ENCODE measurements at regions of chr18 and their contacts with region 1.

Region 1: GRCh38 chr18:63511286-63511685 is 30.9 kb upstream of the SERPINB12 start:
- DNase-seq: peak; percentile 65
- ATAC-seq: peak; percentile 78
- H3K4me3 Mint-ChIP-seq: peak overlapping the region; percentile 45; the same call in 1 of the 2 replicates
- H3K27ac Mint-ChIP-seq: no peak overlapping the region
- H3K4me1 Mint-ChIP-seq: peaks cover 46% of the 10 kb centered on the region
- H3K27me3 Mint-ChIP-seq: no peaks in the 10 kb centered on the region
- CTCF ChIP-seq: peak; percentile 40; the same call in 1 of the 2 replicates

Region 2: DNA sequence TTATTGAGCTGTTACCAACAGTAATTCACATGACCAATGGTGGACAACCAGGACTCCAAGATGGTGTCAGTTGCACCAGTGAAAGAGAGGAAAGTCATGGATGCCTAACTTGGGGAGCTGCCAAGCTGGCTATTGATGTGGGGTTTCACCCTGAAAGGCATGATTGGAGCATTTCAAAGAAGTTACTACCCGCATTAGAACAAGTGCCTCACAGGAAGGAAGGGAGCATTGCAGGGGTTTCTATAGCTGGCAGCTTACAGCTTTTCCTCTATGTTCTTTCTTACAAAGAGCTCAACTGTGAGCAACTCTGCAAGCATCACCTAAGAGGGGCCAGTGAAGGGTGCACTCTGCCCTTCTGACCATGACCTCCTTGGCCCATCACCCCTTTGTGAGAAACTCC is 1093.0 kb before region 1 on chr18:
- CTCF ChIA-PET with region 1: no interaction called
- POLR2A ChIA-PET with region 1: interaction called, 11 read pairs
- DNase-seq: no peak
- ATAC-seq: no peak
- H3K4me3 Mint-ChIP-seq: no peak overlapping the region
- H3K27ac Mint-ChIP-seq: no peak overlapping the region
- H3K4me1 Mint-ChIP-seq: no peaks in the 10 kb centered on the region
- H3K27me3 Mint-ChIP-seq: no peaks in the 10 kb centered on the region
- CTCF ChIP-seq: no peak

Region 3: DNA sequence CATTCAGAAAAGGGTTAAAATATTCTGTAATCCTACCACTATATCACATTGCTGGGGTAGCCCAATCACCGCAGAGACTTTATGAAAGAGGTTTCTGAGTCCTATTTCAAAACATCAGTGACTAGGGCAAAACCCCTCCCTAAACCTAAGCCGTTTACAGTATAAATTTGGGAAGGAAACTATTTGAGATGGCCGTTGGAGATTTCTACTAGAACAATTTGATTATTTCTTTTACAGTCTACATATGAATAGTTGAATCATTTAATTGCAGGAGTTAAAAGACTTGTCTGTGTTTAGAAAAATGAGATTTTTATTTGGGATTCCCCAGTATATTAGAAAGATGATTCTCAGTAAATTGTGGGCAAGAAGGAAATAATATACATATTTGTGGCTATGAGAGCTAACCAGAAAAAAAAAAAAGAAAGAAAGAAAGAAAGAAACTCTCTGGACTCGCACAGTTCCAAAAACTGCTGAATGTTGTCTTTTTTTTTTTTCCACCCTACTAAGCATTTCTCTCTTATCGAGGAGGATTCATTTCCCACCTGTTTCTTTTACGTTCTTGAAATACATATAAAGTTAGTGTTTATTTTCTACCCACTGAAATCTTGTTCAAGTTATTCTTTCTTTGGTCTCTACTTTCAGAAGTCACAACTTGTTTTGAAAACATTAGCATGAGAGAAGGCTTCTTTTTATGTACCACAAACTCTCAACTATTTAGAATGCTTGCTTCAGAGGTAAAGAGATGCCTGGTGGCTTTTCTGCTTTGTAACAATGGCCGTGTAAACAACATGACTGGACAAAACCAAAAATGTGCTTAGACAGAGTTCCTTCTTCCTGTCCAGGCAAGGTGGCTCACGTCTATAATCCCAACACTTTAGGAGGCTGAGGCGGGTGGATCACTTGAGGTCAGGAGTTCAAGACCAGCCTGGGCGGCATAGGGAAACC is 257.6 kb before region 1 on chr18:
- CTCF ChIA-PET with region 1: no interaction called
- POLR2A ChIA-PET with region 1: no interaction called
- DNase-seq: no peak
- ATAC-seq: no peak
- H3K4me3 Mint-ChIP-seq: no peak overlapping the region
- H3K27ac Mint-ChIP-seq: no peak overlapping the region
- H3K4me1 Mint-ChIP-seq: peaks cover 4% of the 10 kb centered on the region; the same call in 1 of the 2 replicates
- H3K27me3 Mint-ChIP-seq: no peaks in the 10 kb centered on the region
- CTCF ChIP-seq: no peak

Region 4: DNA sequence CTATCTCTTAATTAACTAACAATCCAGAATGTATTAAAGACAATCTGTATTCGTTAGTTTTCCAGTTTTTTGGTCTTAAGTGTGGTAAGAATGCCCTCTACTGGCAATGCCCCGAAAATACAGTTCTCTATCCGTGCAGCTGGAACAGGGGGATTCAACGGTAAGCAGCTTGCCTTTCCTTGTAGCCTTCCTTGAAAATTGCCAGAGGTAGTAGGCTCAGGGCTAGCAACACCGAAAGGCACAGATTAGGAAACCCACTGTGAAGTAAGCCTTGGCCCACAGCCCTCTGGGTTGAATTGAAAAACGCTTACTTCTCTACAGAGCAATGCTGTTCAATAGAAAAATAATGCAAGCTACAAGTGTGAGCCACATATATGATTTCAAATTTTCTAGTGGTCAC is 72.0 kb before region 1 on chr18:
- CTCF ChIA-PET with region 1: interaction called, 10 read pairs
- POLR2A ChIA-PET with region 1: no interaction called
- DNase-seq: peak; percentile 50
- ATAC-seq: peak; percentile 96
- H3K4me3 Mint-ChIP-seq: no peak overlapping the region
- H3K27ac Mint-ChIP-seq: no peak overlapping the region
- H3K4me1 Mint-ChIP-seq: no peaks in the 10 kb centered on the region
- H3K27me3 Mint-ChIP-seq: no peaks in the 10 kb centered on the region; the same call in 1 of the 2 replicates
- CTCF ChIP-seq: peak; percentile 53

Region 5: DNA sequence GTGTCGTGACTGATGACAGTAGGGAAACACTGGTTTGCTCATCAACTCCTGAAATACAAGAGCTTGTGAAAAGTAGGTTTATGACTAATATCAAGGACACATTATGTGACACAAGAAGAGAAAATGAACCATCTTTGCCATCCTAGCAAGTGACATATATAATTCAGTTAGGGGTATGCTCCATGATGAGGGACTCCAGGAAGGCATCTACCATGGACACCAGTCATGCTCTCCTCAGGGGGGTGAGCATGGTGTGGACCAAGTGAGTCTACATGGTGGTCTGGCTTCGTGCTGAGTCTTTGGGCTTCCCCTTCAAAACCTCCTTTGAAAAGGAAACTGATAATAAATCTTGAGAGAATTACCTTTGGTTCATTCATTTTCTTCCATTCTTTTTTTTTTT is 46.2 kb before region 1 on chr18:
- CTCF ChIA-PET with region 1: no interaction called
- POLR2A ChIA-PET with region 1: no interaction called
- DNase-seq: no peak
- ATAC-seq: no peak
- H3K4me3 Mint-ChIP-seq: no peak overlapping the region
- H3K27ac Mint-ChIP-seq: no peak overlapping the region
- H3K4me1 Mint-ChIP-seq: no peaks in the 10 kb centered on the region
- H3K27me3 Mint-ChIP-seq: no peaks in the 10 kb centered on the region
- CTCF ChIP-seq: no peak

Region 6: GRCh38 chr18:63492851-63493250 is 18.4 kb before region 1 on chr18:
- CTCF ChIA-PET with region 1: interaction called, 17 read pairs
- POLR2A ChIA-PET with region 1: no interaction called
- DNase-seq: no peak
- ATAC-seq: no peak
- H3K4me3 Mint-ChIP-seq: no peak overlapping the region
- H3K27ac Mint-ChIP-seq: no peak overlapping the region
- H3K4me1 Mint-ChIP-seq: 0 out of 2 replicates have a peak, but pooled peaks cover 4% of the 10 kb centered on the region
- H3K27me3 Mint-ChIP-seq: no peaks in the 10 kb centered on the region
- CTCF ChIP-seq: no peak

Region 7: DNA sequence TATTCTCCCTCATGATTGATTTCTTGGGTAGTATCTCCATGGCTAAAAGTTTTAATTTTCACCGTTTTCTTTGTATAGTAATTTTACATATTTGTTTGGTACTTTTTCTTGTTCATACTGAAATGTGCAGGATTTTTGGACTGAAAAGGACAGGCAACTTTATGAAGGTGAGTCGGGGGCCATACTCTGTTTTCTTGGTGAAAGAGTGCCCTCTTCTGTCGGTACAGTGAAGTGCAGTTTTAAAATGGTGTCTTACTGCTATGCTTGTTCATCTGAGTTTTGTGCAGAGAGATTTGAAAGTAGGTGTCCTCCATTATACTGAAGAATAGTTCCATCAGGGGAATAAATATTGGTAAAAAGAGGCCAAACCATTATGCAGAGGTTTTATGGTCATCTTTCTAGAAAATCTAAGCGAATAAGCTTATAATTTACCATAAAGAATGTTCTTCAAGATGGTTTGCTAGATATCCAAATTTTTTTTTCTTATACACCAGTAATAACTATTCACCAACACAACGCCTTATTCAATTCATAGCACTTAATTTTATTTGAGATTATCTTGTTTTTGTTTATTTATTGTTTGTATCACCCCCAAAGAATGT is 67.2 kb after region 1 on chr18:
- CTCF ChIA-PET with region 1: interaction called, 100 read pairs
- POLR2A ChIA-PET with region 1: interaction called, 4 read pairs
- DNase-seq: peak; percentile 39
- ATAC-seq: peak; percentile 67
- H3K4me3 Mint-ChIP-seq: no peak overlapping the region
- H3K27ac Mint-ChIP-seq: no peak overlapping the region
- H3K4me1 Mint-ChIP-seq: no peaks in the 10 kb centered on the region
- H3K27me3 Mint-ChIP-seq: no peaks in the 10 kb centered on the region
- CTCF ChIP-seq: peak; percentile 74

Region 8: GRCh38 chr18:63741769-63742168 is 230.5 kb after region 1 on chr18:
- CTCF ChIA-PET with region 1: interaction called, 29 read pairs
- POLR2A ChIA-PET with region 1: no interaction called
- DNase-seq: no peak
- ATAC-seq: no peak
- H3K4me3 Mint-ChIP-seq: no peak overlapping the region
- H3K27ac Mint-ChIP-seq: no peak overlapping the region
- H3K4me1 Mint-ChIP-seq: 0 out of 2 replicates have a peak, but pooled peaks cover 2% of the 10 kb centered on the region
- H3K27me3 Mint-ChIP-seq: no peaks in the 10 kb centered on the region
- CTCF ChIP-seq: no peak